ENCODE measurements at regions of chr5 and their contacts with region 1.

Region 1: GRCh38 chr5:86644843-86645242 is 27.1 kb downstream of the COX7C start:
- DNase-seq: no peak
- CTCF ChIP-seq: no peak

Region 2: GRCh38 chr5:86232246-86232645 is 412.6 kb before region 1 on chr5:
- CTCF ChIA-PET with region 1: no interaction called
- POLR2A ChIA-PET with region 1: no interaction called
- DNase-seq: no peak
- CTCF ChIP-seq: no peak

Region 3: DNA sequence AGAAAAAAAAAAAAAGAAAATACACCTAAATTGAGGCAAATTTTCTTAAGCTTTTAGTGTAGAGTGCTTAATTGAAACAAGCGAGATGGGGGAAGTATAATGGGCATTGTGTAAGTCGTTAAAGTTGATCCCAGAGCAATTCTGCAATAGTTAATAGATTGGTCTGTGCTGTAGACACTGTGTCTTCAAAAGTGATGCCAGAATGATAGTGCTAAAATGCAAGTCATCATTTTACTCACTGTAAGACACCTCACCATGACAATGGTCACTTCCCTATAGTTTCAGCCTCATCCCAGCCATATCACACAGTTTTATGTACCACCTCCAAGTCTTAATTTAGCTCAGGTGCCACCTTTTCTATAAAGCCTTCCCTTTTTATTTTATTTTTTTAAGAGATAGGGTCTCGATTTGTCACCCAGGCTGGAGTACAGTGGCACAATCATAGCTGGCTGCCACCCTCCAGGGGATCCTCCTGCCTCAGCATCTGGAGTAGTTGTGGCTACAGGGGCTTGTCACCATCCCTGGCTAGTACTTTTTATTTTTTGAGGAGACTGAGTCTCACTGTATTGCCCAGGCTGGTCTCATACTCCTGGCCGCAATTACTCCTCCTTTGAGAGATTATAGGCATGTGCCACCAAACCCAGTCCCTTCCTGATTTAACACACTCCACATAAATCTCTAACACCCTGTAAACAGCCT is 20.9 kb before region 1 on chr5:
- CTCF ChIA-PET with region 1: interaction called, 13 read pairs
- POLR2A ChIA-PET with region 1: no interaction called
- DNase-seq: no peak
- CTCF ChIP-seq: no peak

Region 4: GRCh38 chr5:86765778-86766502 is 121.1 kb after region 1 on chr5:
- CTCF ChIA-PET with region 1: no interaction called
- POLR2A ChIA-PET with region 1: no interaction called
- DNase-seq: no peak
- CTCF ChIP-seq: no peak

Measured in GM10248 (cell line).